Calu3 (cell line): ENCODE measurements at regions of chr12 and their contacts with region 1.

Region 1: GRCh38 chr12:27840244-27840999 is 60.4 kb upstream of the MANSC4 start:
- DNase-seq: no peak
- H3K4me3 Mint-ChIP-seq: no peak overlapping the region
- H3K27ac Mint-ChIP-seq: no peak overlapping the region
- H3K4me1 Mint-ChIP-seq: peaks cover 14% of the 10 kb centered on the region
- H3K27me3 Mint-ChIP-seq: no peaks in the 10 kb centered on the region
- CTCF ChIP-seq: no peak

Region 2: GRCh38 chr12:27906658-27907473 is 66.4 kb after region 1 on chr12:
- CTCF ChIA-PET with region 1: no interaction called
- intact Hi-C with region 1: no loop called
- DNase-seq: no peak
- H3K4me3 Mint-ChIP-seq: no peak overlapping the region
- H3K27ac Mint-ChIP-seq: no peak overlapping the region
- H3K4me1 Mint-ChIP-seq: no peaks in the 10 kb centered on the region
- H3K27me3 Mint-ChIP-seq: peaks cover 12% of the 10 kb centered on the region
- CTCF ChIP-seq: no peak

Region 3: DNA sequence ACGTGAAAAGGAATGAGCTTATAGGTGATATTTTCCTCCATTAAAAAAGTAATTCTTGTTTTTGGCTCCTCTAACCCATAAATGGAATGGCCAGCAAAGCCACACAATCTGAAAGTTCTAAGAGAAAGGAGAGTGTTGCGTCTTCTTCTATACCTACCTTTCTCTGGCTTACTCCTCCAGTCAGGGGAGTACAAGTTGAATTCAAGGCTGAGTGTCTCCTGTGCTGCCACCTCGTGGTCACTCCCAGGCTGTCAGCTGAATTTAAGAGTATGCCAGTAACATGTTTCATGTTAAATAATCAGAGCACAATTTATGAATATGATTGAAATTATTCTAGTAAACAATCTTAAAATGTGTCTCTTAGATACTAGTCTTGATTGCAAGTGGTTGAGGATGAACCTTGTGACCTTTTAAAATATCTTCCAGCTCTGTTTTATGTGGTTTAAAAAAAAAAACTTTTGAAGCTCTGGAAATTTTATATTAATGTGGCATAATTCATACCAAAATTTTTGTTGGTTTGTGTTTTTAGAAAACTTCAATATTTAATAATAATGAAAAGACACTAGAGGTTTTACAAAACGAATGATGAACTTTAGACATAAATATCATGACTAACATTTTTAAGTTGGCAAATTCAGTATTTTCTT is 100.5 kb after region 1 on chr12:
- CTCF ChIA-PET with region 1: interaction called, 3 read pairs
- intact Hi-C with region 1: loop called (anchors 5 kb)
- DNase-seq: peak; percentile 81
- H3K4me3 Mint-ChIP-seq: no peak overlapping the region
- H3K27ac Mint-ChIP-seq: no peak overlapping the region
- H3K4me1 Mint-ChIP-seq: no peaks in the 10 kb centered on the region
- H3K27me3 Mint-ChIP-seq: no peaks in the 10 kb centered on the region
- CTCF ChIP-seq: peak; percentile 66

Region 4: DNA sequence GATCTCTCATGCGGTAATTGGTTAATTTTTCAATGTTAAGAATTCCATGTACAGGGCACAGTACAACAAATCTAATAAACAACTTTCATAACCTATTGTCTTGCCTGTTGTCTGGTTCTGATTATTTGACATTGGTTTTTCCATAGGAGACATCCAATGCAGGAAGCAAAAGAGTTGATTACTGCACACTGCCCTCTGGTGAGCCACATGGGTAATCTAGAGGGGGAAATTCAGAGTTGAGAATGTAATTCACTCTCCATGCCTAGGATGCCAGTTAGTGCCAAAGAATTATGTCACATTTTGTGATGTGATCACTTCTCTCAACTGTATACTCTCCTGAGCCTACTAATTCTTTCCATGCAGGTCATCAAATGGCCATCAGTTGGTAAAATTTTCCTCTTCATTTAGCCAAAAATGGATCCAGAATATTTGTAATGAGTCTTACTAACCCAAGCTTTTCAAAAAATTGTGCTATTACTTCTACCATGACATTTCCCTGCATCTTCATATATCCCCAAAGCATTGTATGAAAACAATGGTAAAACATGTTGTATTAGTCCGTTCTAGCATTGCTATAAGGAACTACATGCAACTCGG is 332.1 kb after region 1 on chr12:
- CTCF ChIA-PET with region 1: no interaction called
- intact Hi-C with region 1: loop called (anchors 10 kb)
- DNase-seq: peak; percentile 43
- H3K4me3 Mint-ChIP-seq: no peak overlapping the region
- H3K27ac Mint-ChIP-seq: no peak overlapping the region
- H3K4me1 Mint-ChIP-seq: no peaks in the 10 kb centered on the region
- H3K27me3 Mint-ChIP-seq: no peaks in the 10 kb centered on the region
- CTCF ChIP-seq: peak; percentile 31